WTC11 (cell line): ENCODE measurements at regions of chr9 and their contacts with region 1.

Region 1: DNA sequence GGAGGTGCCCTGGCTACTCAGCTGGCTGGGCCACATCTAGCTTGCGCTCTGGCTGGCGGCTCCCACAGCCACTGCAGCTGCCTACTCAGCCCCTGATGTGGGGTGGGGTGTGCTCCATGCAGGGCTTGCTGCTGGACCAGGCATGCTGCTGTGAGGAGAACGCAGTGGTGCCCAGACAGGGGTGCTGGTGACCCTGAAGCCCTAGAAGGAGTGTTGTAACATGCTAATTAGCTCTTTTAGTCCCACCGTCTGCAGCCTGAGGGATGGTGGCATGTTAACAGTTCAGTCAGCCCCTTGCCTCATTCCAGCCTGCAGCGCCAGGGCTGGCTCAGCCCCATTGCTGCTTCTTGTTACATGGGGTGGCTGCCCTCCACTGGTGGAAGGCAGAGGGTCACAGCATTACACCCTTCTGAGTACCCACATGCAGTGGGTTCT is 642.3 kb downstream of the DMRTA1 start:
- DNase-seq: peak; percentile 76
- ATAC-seq: peak; percentile 100
- H3K4me3 Mint-ChIP-seq: no peak overlapping the region
- H3K27ac Mint-ChIP-seq: peak overlapping the region; percentile 49
- H3K4me1 Mint-ChIP-seq: peaks cover 4% of the 10 kb centered on the region
- H3K27me3 Mint-ChIP-seq: no peaks in the 10 kb centered on the region; the same call in 1 of the 2 replicates
- CTCF ChIP-seq: 0 out of 2 replicates have a peak, but pooled peaks have one; percentile 35

Region 2: GRCh38 chr9:22813529-22813928 is 275.4 kb before region 1 on chr9:
- CTCF ChIA-PET with region 1: interaction called, 13 read pairs
- POLR2A ChIA-PET with region 1: no interaction called
- DNase-seq: no peak
- ATAC-seq: peak; percentile 67; the same call in 1 of the 2 replicates
- H3K4me3 Mint-ChIP-seq: no peak overlapping the region
- H3K27ac Mint-ChIP-seq: no peak overlapping the region
- H3K4me1 Mint-ChIP-seq: no peaks in the 10 kb centered on the region
- H3K27me3 Mint-ChIP-seq: no peaks in the 10 kb centered on the region
- CTCF ChIP-seq: no peak